Panc1 (cell line): ENCODE measurements at regions of chr5 and their contacts with region 1.

Region 1: GRCh38 chr5:81105261-81105877 is 127.8 kb upstream of the CKMT2 start:
- DNase-seq: no peak
- ATAC-seq: no peak
- H3K4me3 ChIP-seq: no peak overlapping the region
- H3K27ac ChIP-seq: no peak overlapping the region
- H3K4me1 ChIP-seq: no peaks in the 10 kb centered on the region
- H3K27me3 ChIP-seq: no peaks in the 10 kb centered on the region
- CTCF ChIP-seq: no peak

Region 2: DNA sequence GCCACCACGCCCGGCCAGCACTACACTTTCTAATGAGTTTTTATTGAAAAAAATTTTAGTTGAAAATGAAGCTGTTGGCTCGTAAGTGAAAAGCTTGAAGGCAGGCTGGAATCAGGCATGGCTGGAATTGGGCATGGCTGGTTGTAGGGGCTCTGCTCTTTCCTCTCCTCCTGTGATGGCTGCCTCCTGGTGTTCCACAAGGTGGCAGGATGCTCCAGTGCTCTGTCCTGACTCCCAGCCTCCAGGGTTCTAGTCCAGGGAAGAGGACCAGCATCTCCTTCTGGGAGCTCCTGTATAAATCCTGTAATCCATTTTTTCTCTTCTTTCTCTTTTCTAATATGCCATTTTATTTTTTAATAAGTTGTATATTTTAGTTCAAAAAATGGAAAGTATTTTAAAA is 393.4 kb before region 1 on chr5:
- CTCF ChIA-PET with region 1: no interaction called
- POLR2A ChIA-PET with region 1: no interaction called
- in situ Hi-C with region 1: no loop called
- intact Hi-C with region 1: loop called (anchors 10 kb)
- DNase-seq: peak; percentile 17
- ATAC-seq: peak; percentile 93
- H3K4me3 ChIP-seq: no peak overlapping the region
- H3K27ac ChIP-seq: no peak overlapping the region
- H3K4me1 ChIP-seq: no peaks in the 10 kb centered on the region
- H3K27me3 ChIP-seq: no peaks in the 10 kb centered on the region
- CTCF ChIP-seq: peak; percentile 76

Region 3: GRCh38 chr5:80959768-80960442 is 145.5 kb before region 1 on chr5 and contains the start of gene RASGRF2:
- CTCF ChIA-PET with region 1: no interaction called
- POLR2A ChIA-PET with region 1: no interaction called
- in situ Hi-C with region 1: no loop called
- intact Hi-C with region 1: loop called (anchors 10 kb)
- DNase-seq: no peak
- ATAC-seq: peak; percentile 4; the same call in 1 of the 2 replicates
- H3K4me3 ChIP-seq: peak within 1 kb of the TSS; percentile 43 to 73
- H3K27ac ChIP-seq: peak within 1 kb of the TSS; percentile 70
- H3K4me1 ChIP-seq: no peaks in the 10 kb centered on the region
- H3K27me3 ChIP-seq: no peaks in the 10 kb centered on the region
- CTCF ChIP-seq: no peak
- total RNA-seq, gene RASGRF2: 4.7 TPM

Region 4: GRCh38 chr5:81187885-81188284 is 82.5 kb after region 1 on chr5:
- CTCF ChIA-PET with region 1: no interaction called
- POLR2A ChIA-PET with region 1: no interaction called
- in situ Hi-C with region 1: no loop called
- intact Hi-C with region 1: no loop called
- DNase-seq: no peak
- ATAC-seq: no peak
- H3K4me3 ChIP-seq: no peak overlapping the region
- H3K27ac ChIP-seq: no peak overlapping the region
- H3K4me1 ChIP-seq: no peaks in the 10 kb centered on the region
- H3K27me3 ChIP-seq: no peaks in the 10 kb centered on the region
- CTCF ChIP-seq: no peak

Region 5: DNA sequence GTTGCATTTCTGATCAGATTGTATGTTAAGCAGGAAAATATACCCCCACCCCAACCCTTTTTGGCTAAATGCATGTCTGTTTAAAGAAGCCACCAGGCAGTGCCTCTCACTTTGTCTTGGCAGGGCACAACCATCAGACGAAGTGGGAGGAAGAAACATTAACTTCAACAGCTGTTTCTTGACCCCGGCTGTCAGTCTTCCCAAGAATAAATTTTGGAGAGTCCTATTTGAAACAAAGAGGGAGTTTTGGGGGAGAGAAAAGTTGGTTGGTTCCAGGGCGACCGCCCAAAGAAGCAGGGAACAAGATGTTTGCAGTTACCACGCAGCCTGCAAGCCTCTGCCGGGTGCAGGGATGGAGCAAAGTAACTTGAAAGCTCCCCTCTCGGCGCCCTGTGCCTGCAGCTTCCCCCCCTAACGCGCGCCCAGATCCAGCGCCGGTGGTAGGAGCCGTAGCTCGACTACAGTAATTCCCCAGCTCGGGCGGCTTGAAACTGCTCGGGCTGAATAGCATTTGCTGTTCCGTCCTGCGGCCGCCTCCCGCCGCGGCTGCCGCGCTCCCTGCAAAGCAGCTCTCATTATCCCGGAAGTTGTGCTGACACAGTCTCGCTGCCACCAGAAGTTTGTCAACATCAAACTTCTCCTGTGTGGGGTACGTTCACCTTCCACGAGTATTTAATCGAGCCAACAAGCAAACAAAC is 746.3 kb after region 1 on chr5:
- CTCF ChIA-PET with region 1: no interaction called
- POLR2A ChIA-PET with region 1: interaction called, 16 read pairs
- in situ Hi-C with region 1: no loop called
- intact Hi-C with region 1: no loop called
- DNase-seq: no peak
- ATAC-seq: peak; percentile 92
- H3K4me3 ChIP-seq: peak overlapping the region; percentile 34 to 55
- H3K27ac ChIP-seq: peak overlapping the region; percentile 89
- H3K4me1 ChIP-seq: peaks cover 28% of the 10 kb centered on the region
- H3K27me3 ChIP-seq: no peaks in the 10 kb centered on the region
- CTCF ChIP-seq: no peak